ENCODE measurements at regions of chr2 and their contacts with region 1.

Region 1: DNA sequence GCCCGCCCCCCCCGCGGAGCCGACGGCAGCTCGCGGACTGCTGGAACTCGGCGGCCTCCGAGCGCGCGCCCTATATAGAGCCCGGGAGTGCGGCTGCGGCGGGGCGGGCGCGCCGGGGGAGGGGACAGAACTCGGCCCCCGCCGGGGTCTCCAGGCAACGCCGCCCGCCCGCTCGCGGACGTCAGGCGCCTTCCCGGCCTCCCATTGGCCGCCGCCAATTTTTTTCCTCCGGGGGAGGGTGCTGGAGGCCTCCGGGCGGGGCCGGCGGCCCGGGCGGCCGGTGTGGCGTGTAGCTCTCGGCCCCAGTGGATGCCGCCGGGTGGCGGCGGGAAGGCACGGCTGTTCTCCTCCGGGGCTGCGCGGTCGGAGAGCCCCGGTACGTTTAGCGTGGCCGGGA is at the start of gene ZFP36L2:
- DNase-seq: peak; percentile 92 to 98 (median 97)
- H3K4me3 ChIP-seq: peak within 1 kb of the TSS; percentile 99
- H3K4me3 Mint-ChIP-seq: peak within 1 kb of the TSS; percentile 80 to 99 (median 98)
- H3K27ac ChIP-seq: peak within 1 kb of the TSS; percentile 97
- H3K27ac Mint-ChIP-seq: peak within 1 kb of the TSS; percentile 89 to 98 (median 96)
- H3K4me1 ChIP-seq: peaks cover 24% of the 10 kb centered on the region
- H3K4me1 Mint-ChIP-seq: peaks cover 28 to 32% (median 29%) of the 10 kb centered on the region in 3 donors
- H3K27me3 ChIP-seq: no peaks in the 10 kb centered on the region
- H3K27me3 Mint-ChIP-seq: peaks cover 0 to 36% of the 10 kb centered on the region in 2 donors
- total RNA-seq, gene ZFP36L2: 98.0 to 98.6 TPM

Region 2: DNA sequence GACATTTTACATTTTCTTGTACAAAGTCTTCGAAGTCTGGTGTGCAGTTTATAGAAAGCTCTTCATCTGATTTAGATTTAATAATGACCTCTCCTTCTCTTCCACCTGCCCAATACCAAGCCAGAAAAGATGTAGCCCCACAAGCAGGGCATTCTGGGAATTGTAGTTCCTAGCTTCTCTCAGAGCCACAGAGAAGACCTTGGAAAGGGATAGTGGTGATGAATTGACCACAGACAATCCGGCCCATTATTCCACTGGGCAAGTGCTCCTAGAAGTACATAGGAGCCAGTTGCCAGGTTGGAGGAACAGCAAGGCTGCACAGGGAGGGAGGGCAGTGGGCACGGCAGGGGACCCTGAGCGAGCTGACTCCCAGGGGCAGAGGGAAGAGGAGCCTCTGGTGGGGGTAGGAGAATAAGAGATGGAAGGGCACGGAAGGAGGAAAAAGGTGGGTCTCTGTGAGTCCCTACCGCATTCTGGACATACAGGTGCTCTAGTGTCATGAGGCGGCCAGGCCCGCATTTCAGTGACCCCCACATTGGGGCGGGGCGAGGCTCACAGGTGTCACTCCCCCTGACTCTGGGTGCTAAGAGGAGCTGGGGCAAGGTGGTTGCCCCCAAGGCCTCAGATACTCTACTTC is 281.7 kb before region 1 on chr2:
- CTCF ChIA-PET with region 1: interaction called, 16 read pairs
- POLR2A ChIA-PET with region 1: no interaction called
- DNase-seq: no peak
- H3K4me3 ChIP-seq: no peak overlapping the region
- H3K4me3 Mint-ChIP-seq: no peak overlapping the region
- H3K27ac ChIP-seq: no peak overlapping the region
- H3K27ac Mint-ChIP-seq: no peak overlapping the region
- H3K4me1 ChIP-seq: no peaks in the 10 kb centered on the region
- H3K4me1 Mint-ChIP-seq: no peaks in the 10 kb centered on the region
- H3K27me3 ChIP-seq: no peaks in the 10 kb centered on the region
- H3K27me3 Mint-ChIP-seq: peaks cover 0 to 2% of the 10 kb centered on the region in 2 donors

Region 3: DNA sequence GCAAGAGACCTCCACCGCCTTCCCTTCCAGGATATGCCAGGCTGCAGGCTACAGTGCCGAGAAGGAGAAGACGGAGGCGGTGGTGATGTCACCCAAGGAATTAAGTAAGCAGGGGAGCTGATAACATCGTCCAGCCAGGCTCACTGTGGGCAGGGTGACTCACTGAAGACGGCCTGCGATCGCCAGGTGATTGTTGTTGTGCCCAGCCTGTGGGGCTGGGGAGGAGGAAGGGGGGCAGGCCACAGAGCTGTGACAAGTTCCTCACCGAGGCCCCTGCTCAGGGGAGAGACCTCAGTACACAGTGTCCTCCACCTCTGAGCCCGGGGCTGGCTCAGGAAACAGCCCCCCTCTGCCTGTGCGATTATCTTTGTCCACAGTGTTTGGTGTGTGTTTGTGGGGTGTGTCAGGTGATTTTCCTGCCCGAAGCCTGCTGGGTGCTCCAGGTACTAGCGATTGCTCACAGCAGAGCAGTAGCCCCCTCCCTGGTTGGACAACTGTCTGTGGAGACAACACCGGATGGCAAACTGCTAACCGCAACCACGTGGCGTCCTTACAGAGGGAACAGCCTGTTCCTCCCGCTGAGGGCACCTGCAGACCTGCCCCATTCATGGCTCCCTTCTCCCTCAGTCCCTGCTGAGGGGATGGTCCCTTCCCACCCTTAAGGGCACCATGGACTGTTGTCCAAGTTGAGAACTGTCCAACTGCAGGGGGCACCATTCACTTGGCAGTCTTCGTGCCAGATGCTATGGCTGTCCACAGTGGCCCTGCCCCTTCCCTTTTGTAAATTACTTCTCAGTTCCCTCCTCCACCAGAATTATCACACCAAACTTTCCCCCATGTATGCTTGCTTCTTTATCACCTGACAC is 95.3 kb before region 1 on chr2:
- CTCF ChIA-PET with region 1: interaction called, 820 read pairs
- POLR2A ChIA-PET with region 1: interaction called, 590 read pairs
- DNase-seq: peak; percentile 74 to 96 (median 88)
- H3K4me3 ChIP-seq: peak overlapping the region; percentile 60
- H3K4me3 Mint-ChIP-seq: peak overlapping the region; percentile 38 to 85 (median 64)
- H3K27ac ChIP-seq: peak overlapping the region; percentile 84
- H3K27ac Mint-ChIP-seq: peak overlapping the region; percentile 91 to 100 (median 100)
- H3K4me1 ChIP-seq: peaks cover 91% of the 10 kb centered on the region
- H3K4me1 Mint-ChIP-seq: peaks cover 83 to 92% (median 90%) of the 10 kb centered on the region in 3 donors
- H3K27me3 ChIP-seq: no peaks in the 10 kb centered on the region
- H3K27me3 Mint-ChIP-seq: peaks cover 0 to 1% of the 10 kb centered on the region in 2 donors

Region 4: GRCh38 chr2:43169987-43170386 is 56.6 kb before region 1 on chr2:
- CTCF ChIA-PET with region 1: interaction called, 580 read pairs
- POLR2A ChIA-PET with region 1: interaction called, 224 read pairs
- DNase-seq: peak; percentile 42 to 77 (median 67)
- H3K4me3 ChIP-seq: peak overlapping the region; percentile 57
- H3K4me3 Mint-ChIP-seq: peak overlapping the region; percentile 57 to 94 (median 84)
- H3K27ac ChIP-seq: peak overlapping the region; percentile 53
- H3K27ac Mint-ChIP-seq: peak overlapping the region; percentile 91 to 100 (median 99)
- H3K4me1 ChIP-seq: peaks cover 80% of the 10 kb centered on the region
- H3K4me1 Mint-ChIP-seq: peaks cover 73 to 85% (median 81%) of the 10 kb centered on the region in 3 donors
- H3K27me3 ChIP-seq: no peaks in the 10 kb centered on the region
- H3K27me3 Mint-ChIP-seq: peaks cover 0 to 5% of the 10 kb centered on the region in 2 donors

Region 5: DNA sequence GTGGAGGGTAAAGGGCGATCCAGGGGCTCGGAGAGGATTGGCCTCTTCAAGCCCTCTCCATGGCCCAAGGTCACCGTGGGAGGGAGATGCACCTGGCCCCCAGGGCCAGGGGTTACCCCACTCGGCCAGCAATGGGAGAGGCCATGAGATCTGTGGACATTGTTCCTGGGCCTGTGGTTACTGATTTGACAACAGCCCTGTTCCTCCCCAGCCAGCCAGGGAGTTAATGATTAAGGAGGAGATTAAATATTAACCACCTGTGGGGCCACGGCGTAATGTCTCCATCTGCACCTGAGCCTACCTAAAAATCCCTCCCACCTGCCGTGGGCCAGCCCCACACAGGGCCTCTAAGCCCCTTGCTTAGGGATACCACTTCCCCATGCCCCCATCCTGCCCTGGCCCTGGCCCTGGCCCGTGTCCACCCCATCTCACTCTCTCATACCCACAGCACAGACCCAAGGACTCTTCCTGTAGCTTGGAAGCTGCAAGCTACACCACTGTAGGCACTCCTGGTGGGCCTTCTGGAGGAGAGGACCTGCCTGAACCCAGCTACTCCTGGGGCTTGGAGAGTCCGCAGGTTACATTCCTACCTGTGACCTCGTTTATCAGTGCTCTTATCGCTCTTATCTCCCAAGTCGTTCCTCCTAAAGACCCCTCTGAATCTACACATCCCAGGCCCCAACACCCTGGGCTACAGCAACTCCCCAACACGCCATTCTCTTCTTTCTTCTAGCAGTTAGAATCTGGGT is 32.3 kb before region 1 on chr2:
- CTCF ChIA-PET with region 1: interaction called, 33 read pairs
- POLR2A ChIA-PET with region 1: interaction called, 16 read pairs
- DNase-seq: no peak
- H3K4me3 ChIP-seq: peak overlapping the region; percentile 74
- H3K4me3 Mint-ChIP-seq: peak overlapping the region; percentile 71 to 92 (median 85)
- H3K27ac ChIP-seq: peak overlapping the region; percentile 86
- H3K27ac Mint-ChIP-seq: peak overlapping the region; percentile 95 to 100 (median 98)
- H3K4me1 ChIP-seq: peaks cover 84% of the 10 kb centered on the region
- H3K4me1 Mint-ChIP-seq: peaks cover 55 to 76% (median 59%) of the 10 kb centered on the region in 3 donors
- H3K27me3 ChIP-seq: no peaks in the 10 kb centered on the region
- H3K27me3 Mint-ChIP-seq: no peaks in the 10 kb centered on the region

Region 6: GRCh38 chr2:43484323-43484930 is 257.9 kb after region 1 on chr2:
- CTCF ChIA-PET with region 1: interaction called, 32 read pairs
- POLR2A ChIA-PET with region 1: no interaction called
- DNase-seq: peak in 2 of 5 donors; percentile 34 to 48
- H3K4me3 ChIP-seq: no peak overlapping the region
- H3K4me3 Mint-ChIP-seq: peak overlapping the region in 2 of 7 donors; percentile 16 to 23
- H3K27ac ChIP-seq: no peak overlapping the region
- H3K27ac Mint-ChIP-seq: peak overlapping the region in 2 of 8 donors; percentile 70 to 79
- H3K4me1 ChIP-seq: no peaks in the 10 kb centered on the region
- H3K4me1 Mint-ChIP-seq: peaks cover 16 to 29% (median 21%) of the 10 kb centered on the region in 3 donors
- H3K27me3 ChIP-seq: no peaks in the 10 kb centered on the region
- H3K27me3 Mint-ChIP-seq: no peaks in the 10 kb centered on the region